ENCODE measurements at regions of chr1 and their contacts with region 1.

Region 1: DNA sequence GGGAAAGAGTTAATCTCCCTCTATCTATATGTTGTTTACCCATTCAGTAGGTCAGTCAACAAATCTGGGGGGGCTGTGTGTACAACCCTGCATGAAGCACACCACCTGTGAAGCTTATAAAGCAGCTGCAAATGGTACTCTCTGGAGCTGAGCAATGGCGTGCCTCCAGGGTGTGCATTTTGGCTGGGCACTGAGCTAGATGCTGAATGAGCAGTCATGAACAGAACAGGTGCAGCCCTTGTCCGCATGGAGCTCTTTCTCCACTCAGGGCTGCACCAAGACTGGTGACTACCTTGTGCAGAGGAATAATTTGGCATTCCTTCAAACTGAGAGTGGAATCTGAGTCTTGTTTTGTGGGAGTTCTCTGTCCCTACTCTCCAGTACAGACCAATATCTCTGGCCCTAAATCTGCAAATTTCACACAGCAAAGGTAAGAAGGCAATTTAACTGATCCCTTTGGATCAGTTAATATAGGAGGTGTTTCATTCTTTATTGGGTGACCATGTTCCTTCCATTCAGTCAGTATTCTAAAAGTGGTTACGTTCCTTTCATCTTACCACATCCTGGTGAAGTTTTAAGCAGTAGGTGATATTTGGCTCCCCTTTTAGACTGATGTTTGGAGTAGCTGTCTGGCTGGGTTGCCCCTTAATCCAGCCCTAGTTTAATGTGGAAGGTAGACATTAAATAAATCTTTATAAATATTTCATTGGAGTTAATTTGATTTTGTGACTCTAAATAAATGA is 76.0 kb downstream of the GPR88 start:
- DNase-seq: no peak
- H3K4me3 ChIP-seq: no peak overlapping the region
- H3K27ac ChIP-seq: no peak overlapping the region
- H3K4me1 ChIP-seq: peaks cover 0 to 14% (median 5%) of the 10 kb centered on the region in 3 donors
- H3K27me3 ChIP-seq: no peaks in the 10 kb centered on the region
- CTCF ChIP-seq: no peak

Region 2: DNA sequence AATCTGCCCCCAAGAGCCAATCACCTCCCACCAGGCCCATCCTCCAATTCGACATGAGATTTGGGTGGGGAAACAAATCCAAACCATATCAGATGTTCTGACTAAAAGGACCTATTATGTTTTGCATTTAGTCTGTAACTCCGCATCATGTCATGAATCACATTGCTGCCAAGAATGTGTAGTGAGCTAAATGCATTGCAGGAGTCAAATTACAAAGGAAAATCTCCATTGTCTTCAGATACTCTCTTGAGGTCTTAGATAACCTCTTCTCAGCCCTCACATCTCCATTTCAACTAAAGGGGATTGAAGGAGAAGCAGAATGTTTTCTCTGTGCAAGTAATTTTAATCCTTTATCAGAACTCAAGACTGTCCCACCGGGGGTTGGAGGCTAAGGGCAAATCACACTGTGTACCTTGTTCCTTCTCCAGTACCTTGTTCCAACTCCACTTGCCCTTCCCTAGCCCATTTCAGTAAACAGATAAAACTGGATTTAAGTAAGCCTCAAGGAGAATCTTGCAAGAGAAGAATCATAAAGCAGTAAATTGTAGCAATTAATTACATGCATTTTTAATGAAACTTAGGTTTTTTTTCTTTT is 246.5 kb after region 1 on chr1:
- intact Hi-C with region 1: loop called (anchors 5 kb)
- DNase-seq: peak in 2 of 5 donors; percentile 10 to 62
- H3K4me3 ChIP-seq: no peak overlapping the region
- H3K27ac ChIP-seq: no peak overlapping the region
- H3K4me1 ChIP-seq: no peaks in the 10 kb centered on the region
- H3K27me3 ChIP-seq: no peaks in the 10 kb centered on the region
- CTCF ChIP-seq: no peak

Measured in kidney (tissue), 22 donors.